ENCODE measurements at regions of chr1 and their contacts with region 1.

Region 1: DNA sequence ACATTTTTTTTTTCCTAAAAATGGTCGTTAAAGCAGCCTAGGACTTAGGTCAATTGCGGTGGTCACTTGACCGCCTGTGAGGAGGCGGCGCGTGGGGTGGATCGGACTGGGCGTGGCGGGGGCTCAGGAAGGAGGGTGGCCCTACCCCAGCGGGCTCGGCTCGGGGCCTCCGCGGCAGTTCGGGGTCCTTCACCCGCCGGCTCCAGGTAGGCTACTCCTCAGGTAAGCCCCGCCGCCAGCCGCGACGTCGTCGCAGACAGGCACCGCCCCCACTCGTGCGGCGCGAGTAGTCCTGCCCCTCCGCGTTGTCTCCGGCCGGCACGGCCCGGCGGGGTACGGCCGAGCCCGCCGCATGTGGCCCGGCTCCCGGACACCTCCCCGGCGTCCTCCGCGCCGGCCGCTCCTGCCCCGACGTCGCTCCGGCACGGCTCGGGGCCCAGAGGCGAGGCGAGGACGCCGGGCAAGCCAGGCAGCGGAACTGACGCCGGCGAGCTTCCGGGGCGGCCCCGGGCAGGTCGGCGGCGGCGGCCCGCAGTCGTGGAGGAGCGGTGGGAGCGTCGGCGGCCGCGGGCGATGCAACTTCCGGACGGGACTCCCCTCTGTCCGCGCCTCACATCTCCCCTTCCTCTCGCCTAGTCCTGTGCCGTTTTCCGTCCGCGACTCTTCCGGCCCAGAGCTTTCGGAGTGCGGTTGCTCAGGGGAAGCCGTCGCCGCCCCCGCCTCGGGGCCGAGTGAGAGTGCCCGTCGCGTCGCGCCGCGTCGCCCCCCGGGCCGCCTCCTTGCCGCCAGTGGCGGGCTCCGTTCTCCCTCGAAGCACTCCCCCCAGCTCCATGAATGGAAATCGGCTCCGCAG is at the start of gene AGO3:
- DNase-seq: peak; percentile 87
- H3K4me3 Mint-ChIP-seq: peak within 1 kb of the TSS; percentile 93
- H3K27ac Mint-ChIP-seq: peak within 1 kb of the TSS; percentile 97
- H3K4me1 Mint-ChIP-seq: peaks cover 36% of the 10 kb centered on the region
- H3K27me3 Mint-ChIP-seq: no peaks in the 10 kb centered on the region
- total RNA-seq, gene AGO3: 26.1 and 33.6 TPM in 2 replicates

Region 2: GRCh38 chr1:35030756-35031446 is 899.9 kb before region 1 on chr1:
- intact Hi-C with region 1: loop called (anchors 5 kb)
- DNase-seq: peak; percentile 27
- H3K4me3 Mint-ChIP-seq: peak overlapping the region; percentile 98
- H3K27ac Mint-ChIP-seq: peak overlapping the region; percentile 97
- H3K4me1 Mint-ChIP-seq: peaks cover 35% of the 10 kb centered on the region
- H3K27me3 Mint-ChIP-seq: no peaks in the 10 kb centered on the region

Region 3: GRCh38 chr1:35557292-35558063 is 373.3 kb before region 1 on chr1 and contains the starts of genes KIAA0319L and NCDN:
- intact Hi-C with region 1: loop called (anchors 5 kb)
- DNase-seq: peak; percentile 94
- H3K4me3 Mint-ChIP-seq: peak within 1 kb of the TSS; percentile 98
- H3K27ac Mint-ChIP-seq: peak within 1 kb of the TSS; percentile 96
- H3K4me1 Mint-ChIP-seq: peaks cover 68% of the 10 kb centered on the region
- H3K27me3 Mint-ChIP-seq: no peaks in the 10 kb centered on the region
- total RNA-seq, gene KIAA0319L: 42.5 and 43.6 TPM in 2 replicates
- total RNA-seq, gene NCDN: 43.8 and 45.1 TPM in 2 replicates

Region 4: DNA sequence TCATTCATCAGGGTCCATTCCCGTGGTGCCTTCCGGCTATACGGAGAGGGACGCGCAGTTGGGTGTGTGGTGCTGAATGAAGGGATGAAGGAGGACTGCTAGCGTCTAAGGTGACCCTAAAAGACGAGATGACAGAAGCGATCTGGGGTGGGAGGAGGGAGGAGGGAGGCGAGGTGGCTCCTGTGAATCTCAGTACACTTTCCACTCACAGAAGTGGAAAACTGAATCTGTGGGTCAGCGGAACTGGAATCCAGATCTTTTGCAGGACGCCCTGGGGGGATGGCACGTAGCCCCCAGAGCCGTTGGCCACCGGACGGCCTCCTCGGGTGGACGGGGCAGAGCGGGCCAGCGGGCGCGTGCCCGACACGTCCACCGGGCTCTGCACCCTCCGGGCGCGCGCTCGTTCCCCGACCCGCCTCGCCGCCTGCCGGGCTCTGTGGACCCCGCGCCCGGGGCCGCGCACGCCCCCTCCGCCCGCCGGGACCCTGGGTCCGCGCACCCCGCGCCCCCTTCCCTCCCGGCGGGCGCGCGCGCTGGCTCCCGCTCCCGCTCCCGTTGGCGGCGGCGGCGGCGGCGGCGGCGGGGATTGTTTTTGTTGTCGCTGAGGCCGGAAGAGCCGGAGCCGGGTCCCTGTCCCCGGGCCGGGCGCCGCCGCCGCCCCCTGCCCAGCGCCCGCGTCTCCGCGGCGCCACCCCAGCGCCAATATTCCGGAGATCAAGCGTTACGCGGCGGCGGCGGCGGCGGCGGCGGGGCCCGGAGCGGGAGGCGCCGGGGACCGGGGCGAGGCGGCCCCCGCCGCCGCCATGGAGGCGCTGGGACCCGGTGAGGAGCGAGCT is 123.0 kb before region 1 on chr1 and contains the start of gene AGO4:
- intact Hi-C with region 1: loop called (anchors 5 kb)
- DNase-seq: peak; percentile 13
- H3K4me3 Mint-ChIP-seq: peak within 1 kb of the TSS; percentile 94
- H3K27ac Mint-ChIP-seq: peak within 1 kb of the TSS; percentile 92
- H3K4me1 Mint-ChIP-seq: peaks cover 31% of the 10 kb centered on the region
- H3K27me3 Mint-ChIP-seq: no peaks in the 10 kb centered on the region
- total RNA-seq, gene AGO4: 7.5 and 8.0 TPM in 2 replicates

Region 5: DNA sequence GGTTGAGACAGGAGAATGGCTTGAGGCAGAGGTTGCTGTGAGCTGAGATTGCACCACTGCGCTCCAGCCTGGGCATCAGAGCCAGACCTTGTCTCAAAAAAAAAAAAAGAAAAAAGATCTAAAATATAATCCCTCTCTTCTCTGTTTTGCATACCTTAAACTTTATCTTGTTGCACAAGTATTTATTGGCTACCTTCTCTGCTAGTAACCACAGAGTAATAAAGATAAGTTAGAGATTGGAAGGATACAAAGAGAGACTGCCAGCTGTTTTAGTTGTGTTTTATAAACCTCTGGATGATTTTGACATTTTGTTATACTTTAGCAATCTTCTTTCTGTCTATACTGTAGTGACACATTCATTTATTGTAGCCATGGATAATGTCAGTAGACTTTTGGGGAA is 27.7 kb after region 1 on chr1:
- intact Hi-C with region 1: no loop called
- DNase-seq: no peak
- H3K4me3 Mint-ChIP-seq: no peak overlapping the region
- H3K27ac Mint-ChIP-seq: no peak overlapping the region
- H3K4me1 Mint-ChIP-seq: no peaks in the 10 kb centered on the region
- H3K27me3 Mint-ChIP-seq: no peaks in the 10 kb centered on the region

Region 6: GRCh38 chr1:36088575-36089443 is 158.0 kb after region 1 on chr1 and contains the start of gene ADPRS:
- intact Hi-C with region 1: loop called (anchors 1 kb)
- DNase-seq: peak; percentile 88
- H3K4me3 Mint-ChIP-seq: peak within 1 kb of the TSS; percentile 97
- H3K27ac Mint-ChIP-seq: peak within 1 kb of the TSS; percentile 96
- H3K4me1 Mint-ChIP-seq: peaks cover 20% of the 10 kb centered on the region
- H3K27me3 Mint-ChIP-seq: peaks cover 7% of the 10 kb centered on the region
- total RNA-seq, gene ADPRS: 32.6 and 33.6 TPM in 2 replicates